Heart right ventricle (tissue), 16 donors: ENCODE measurements at regions of chr15 and their contacts with region 1.

Region 1: DNA sequence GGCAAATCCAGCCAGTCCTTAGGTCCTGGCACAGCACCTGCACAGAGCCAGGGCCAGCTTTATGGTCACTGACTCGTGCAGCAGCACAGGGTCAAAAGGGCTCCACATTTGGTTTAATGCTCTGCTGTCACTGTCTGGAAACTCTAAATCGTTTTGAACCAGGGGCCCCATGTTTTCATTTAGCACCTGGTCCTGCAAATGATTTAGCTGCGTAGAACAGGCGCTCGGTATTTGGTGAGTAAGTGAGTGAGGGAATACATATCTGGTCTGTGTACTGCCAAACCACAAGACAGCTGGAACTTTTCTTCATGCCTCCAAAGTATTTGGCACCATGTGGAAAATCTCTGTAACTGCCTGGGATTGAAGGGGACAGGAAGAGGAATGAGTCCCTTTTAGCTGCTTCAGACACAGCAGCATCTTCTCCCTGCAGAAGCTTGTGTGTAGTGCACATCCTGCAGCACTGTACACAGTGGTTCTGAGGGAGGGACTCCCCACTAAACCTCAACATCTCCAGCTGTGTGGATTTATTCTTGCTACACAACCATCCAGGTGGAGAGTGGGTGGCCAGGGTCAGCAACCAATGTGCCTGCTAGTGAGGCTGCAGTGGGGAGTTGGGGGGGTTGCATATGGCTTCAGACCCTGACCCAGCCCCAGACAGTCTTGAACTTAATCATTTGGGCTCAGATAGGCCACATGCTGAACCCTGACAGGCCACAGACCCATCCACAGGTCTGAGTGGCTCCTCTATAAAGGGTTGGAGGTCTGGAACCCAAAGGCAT is 1.1 kb downstream of the SH2D7 start:
- DNase-seq: no peak
- ATAC-seq: peak; percentile 46 to 88 (median 82)
- H3K4me3 ChIP-seq: no peak overlapping the region
- H3K27ac ChIP-seq: peak overlapping the region in 3 of 10 donors; percentile 18 to 58 (median 30)
- H3K4me1 ChIP-seq: peaks cover 10 to 29% (median 23%) of the 10 kb centered on the region in 9 donors
- H3K27me3 ChIP-seq: no peaks in the 10 kb centered on the region
- CTCF ChIP-seq: no peak

Region 2: DNA sequence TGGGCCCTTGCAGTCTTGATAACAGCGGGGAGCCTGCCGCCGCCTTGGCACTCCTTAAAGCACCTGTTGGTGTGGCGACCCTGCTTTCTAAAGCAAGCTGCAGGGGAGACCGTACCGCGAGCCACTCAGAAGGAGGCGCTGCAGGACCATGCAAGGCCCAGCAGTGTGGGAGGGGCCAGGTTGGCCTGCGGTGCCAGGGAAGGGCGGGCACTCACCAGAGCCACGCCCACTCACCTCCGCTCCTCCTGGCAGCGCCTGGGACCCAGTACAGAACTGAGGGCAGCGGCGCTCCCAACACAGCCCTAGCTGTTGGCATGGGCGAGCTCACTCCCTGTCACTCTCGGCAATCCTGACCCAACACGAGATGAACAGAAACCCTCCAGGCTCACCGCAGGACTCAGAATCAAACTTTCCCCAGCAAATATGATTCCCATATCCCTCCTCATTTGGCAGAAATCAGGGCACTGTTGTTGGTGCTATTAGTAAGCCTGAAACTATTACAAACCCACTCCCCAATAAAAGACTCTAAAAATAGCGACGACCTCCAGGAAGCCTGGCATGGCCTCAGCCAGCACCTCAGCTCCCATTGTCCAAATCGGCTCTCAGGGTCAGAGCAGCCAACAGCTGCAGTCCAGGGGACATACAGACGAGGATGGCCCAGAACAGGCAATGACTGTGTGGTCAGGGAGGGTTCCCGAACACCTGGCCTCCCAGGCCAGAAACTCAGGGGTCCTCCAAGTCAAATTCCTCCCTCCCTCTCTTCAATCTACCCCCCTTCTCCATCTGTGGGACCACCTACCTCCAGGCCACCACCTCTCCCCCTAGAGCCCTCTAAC is 93.1 kb before region 1 on chr15:
- intact Hi-C with region 1: loop called in 1 of 10 experiments (anchors 5 kb)
- DNase-seq: peak; percentile 57 to 74
- ATAC-seq: peak; percentile 43 to 77 (median 60)
- H3K4me3 ChIP-seq: no peak overlapping the region
- H3K27ac ChIP-seq: no peak overlapping the region
- H3K4me1 ChIP-seq: peaks cover 9 to 45% (median 25%) of the 10 kb centered on the region in 9 donors
- H3K27me3 ChIP-seq: no peaks in the 10 kb centered on the region
- CTCF ChIP-seq: peak in 8 of 9 donors; percentile 37 to 62 (median 54)

Region 3: GRCh38 chr15:78049691-78050440 is 43.6 kb before region 1 on chr15:
- intact Hi-C with region 1: loop called in 1 of 10 experiments (anchors 5 kb)
- DNase-seq: no peak
- ATAC-seq: peak in 6 of 8 donors; percentile 31 to 61 (median 38)
- H3K4me3 ChIP-seq: peak overlapping the region in 1 of 10 donors; percentile 4
- H3K27ac ChIP-seq: peak overlapping the region in 8 of 10 donors; percentile 13 to 87 (median 70)
- H3K4me1 ChIP-seq: peaks cover 18 to 98% (median 66%) of the 10 kb centered on the region in 9 donors
- H3K27me3 ChIP-seq: no peaks in the 10 kb centered on the region
- CTCF ChIP-seq: no peak